ENCODE measurements at regions of chr12 and their contacts with region 1.

Region 1: DNA sequence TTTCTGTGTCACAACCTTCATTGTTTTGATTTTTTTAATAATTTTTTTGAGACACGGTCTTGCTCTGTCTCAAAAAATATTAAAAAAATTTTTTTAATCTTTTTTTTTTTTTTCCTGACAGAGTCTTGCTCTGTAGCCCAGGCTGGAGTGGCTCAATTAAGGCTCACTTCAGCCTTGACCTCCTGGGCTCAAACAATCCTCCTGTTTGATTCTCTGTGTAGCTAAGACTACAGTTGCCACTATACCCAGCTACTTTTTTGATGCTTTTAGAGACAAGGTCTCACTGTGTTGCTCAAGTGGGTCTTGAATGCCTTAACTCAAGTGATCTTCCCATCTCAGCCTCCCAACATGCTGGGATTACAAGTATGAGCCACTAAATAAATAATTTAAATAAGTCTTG is 9.2 kb upstream of the PRH2 start:
- DNase-seq: no peak
- H3K4me3 ChIP-seq: no peak overlapping the region
- H3K27ac ChIP-seq: no peak overlapping the region
- H3K4me1 ChIP-seq: no peaks in the 10 kb centered on the region
- H3K27me3 ChIP-seq: no peaks in the 10 kb centered on the region
- CTCF ChIP-seq: no peak

Region 2: DNA sequence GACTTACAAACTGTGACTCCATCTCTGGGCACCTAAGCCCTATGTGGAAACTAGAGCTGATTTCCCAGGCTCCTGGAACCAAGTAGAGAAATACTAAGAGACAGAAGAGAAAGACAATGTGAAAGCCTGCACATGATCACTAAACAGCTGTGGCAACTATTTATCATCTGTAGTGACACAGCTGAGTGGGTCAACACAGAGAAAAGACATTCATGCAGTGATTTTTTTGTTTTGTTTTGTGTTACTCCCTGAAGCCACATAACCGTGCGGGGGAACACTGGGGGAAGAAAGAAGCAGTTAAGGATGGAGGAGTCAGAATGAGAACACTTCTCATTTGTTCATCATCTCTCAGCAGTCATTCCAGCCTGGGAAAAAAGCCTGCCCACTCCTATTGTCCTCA is 72.1 kb before region 1 on chr12:
- CTCF ChIA-PET with region 1: interaction called, 10 read pairs
- POLR2A ChIA-PET with region 1: no interaction called
- intact Hi-C with region 1: no loop called
- DNase-seq: no peak
- H3K4me3 ChIP-seq: no peak overlapping the region
- H3K27ac ChIP-seq: no peak overlapping the region
- H3K4me1 ChIP-seq: no peaks in the 10 kb centered on the region
- H3K27me3 ChIP-seq: no peaks in the 10 kb centered on the region
- CTCF ChIP-seq: no peak

Measured in PC-9 (cell line).